CD14-positive monocyte (primary cell): ENCODE measurements at regions of chr17 and their contacts with region 1.

Region 1: DNA sequence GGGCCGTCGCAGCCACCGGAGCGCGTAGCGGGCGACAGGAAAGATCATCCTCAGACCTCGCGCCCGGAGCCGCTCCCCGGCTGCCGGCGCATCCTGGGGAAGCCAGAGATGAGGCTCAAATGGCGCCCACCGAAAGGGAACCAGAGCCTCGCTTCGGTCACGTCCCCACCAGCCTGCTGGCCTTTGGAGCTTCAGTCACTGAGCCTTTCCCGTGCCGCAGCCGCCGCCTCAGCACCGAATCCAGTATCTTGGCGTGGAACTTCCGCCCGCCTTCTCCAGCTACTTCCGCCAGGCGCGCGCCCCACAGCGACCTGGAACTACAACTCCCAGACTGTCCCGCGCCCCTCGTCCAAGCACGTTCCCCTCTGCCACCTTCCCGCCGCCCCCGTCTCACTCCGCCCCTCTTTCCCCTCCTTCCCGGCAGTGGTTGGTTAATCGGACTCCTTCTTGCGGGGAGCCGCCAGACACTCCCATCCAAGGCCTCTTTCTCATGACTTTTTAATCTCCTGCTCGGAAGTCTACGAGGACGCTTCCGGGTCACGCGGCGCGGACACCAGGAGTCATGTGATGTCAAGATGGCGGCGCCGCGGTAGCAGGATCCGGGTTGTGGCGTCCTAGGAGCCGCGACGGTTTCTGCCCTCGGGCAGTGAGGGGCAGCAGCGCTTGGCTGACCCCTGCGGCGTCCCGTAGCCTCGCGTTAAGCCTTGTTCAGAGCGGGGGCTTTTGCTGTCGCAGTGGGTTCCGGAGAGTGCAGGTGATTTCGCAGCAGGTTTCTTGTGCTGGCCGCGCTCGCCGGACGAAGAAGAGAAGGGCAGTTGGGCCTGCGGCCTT is at the starts of genes SMCR8 and TOP3A:
- DNase-seq: peak; percentile 94 to 98 (median 97)
- H3K4me3 ChIP-seq: peak within 1 kb of the TSS; percentile 55 to 88 (median 84)
- H3K4me3 Mint-ChIP-seq: peak within 1 kb of the TSS; percentile 93 to 97
- H3K27ac ChIP-seq: peak within 1 kb of the TSS; percentile 97 to 100
- H3K27ac Mint-ChIP-seq: peak within 1 kb of the TSS; percentile 98 to 100 (median 100)
- H3K4me1 ChIP-seq: peaks cover 65 to 87% of the 10 kb centered on the region in 2 donors
- H3K4me1 Mint-ChIP-seq: peaks cover 78% of the 10 kb centered on the region
- H3K27me3 ChIP-seq: no peaks in the 10 kb centered on the region
- H3K27me3 Mint-ChIP-seq: no peaks in the 10 kb centered on the region
- CTCF ChIP-seq: no peak
- polyA plus RNA-seq, gene SMCR8: 2.4 to 24.4 (median 5.3) TPM
- polyA plus RNA-seq, gene TOP3A: 15.2 to 25.6 (median 22.3) TPM

Region 2: GRCh38 chr17:18285296-18285695 is 29.6 kb before region 1 on chr17:
- intact Hi-C with region 1: no loop called
- DNase-seq: no peak
- H3K4me3 ChIP-seq: no peak overlapping the region
- H3K4me3 Mint-ChIP-seq: no peak overlapping the region
- H3K27ac ChIP-seq: no peak overlapping the region
- H3K27ac Mint-ChIP-seq: peak overlapping the region in 1 of 7 donors; percentile 33
- H3K4me1 ChIP-seq: no peaks in the 10 kb centered on the region
- H3K4me1 Mint-ChIP-seq: no peaks in the 10 kb centered on the region
- H3K27me3 ChIP-seq: no peaks in the 10 kb centered on the region
- H3K27me3 Mint-ChIP-seq: no peaks in the 10 kb centered on the region
- CTCF ChIP-seq: no peak

Region 3: GRCh38 chr17:18300725-18301480 is 14.0 kb before region 1 on chr17:
- intact Hi-C with region 1: loop called in 1 of 2 experiments (anchors 2 kb)
- DNase-seq: peak; percentile 53 to 71 (median 64)
- H3K4me3 ChIP-seq: peak overlapping the region in 2 of 3 experiments; percentile 4 to 59
- H3K4me3 Mint-ChIP-seq: peak overlapping the region; percentile 64 to 78
- H3K27ac ChIP-seq: peak overlapping the region; percentile 72 to 85
- H3K27ac Mint-ChIP-seq: peak overlapping the region; percentile 91 to 97 (median 95)
- H3K4me1 ChIP-seq: peaks cover 62 to 70% of the 10 kb centered on the region in 2 donors
- H3K4me1 Mint-ChIP-seq: peaks cover 67% of the 10 kb centered on the region
- H3K27me3 ChIP-seq: no peaks in the 10 kb centered on the region
- H3K27me3 Mint-ChIP-seq: no peaks in the 10 kb centered on the region
- CTCF ChIP-seq: no peak